Calu3 (cell line): ENCODE measurements at regions of chr1 and their contacts with region 1.

Region 1: DNA sequence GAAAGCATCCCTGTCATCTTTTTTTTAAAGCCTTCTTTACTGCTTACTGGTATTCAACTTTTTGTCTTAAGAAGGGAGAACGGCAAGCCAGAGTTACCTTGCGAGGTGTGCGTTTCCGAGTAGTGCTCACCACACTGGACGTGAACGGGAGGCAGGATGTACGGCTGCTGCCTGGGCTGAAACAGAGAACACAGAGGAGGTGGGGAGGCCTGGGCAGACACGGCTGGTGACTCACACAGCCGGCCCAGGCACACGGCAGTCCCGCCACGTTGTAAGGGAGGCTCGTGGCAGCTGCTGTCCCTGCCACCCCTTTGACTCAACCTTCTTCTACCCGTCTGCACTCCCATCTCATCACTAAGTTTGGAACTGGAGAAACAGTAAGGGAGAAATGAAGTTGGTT is 105.8 kb downstream of the SMYD2 start:
- DNase-seq: no peak
- H3K4me3 Mint-ChIP-seq: no peak overlapping the region
- H3K27ac Mint-ChIP-seq: no peak overlapping the region
- H3K4me1 Mint-ChIP-seq: no peaks in the 10 kb centered on the region
- H3K27me3 Mint-ChIP-seq: no peaks in the 10 kb centered on the region
- CTCF ChIP-seq: no peak

Region 2: GRCh38 chr1:214328770-214329469 is 57.8 kb before region 1 on chr1:
- CTCF ChIA-PET with region 1: no interaction called
- intact Hi-C with region 1: no loop called
- DNase-seq: peak; percentile 83
- H3K4me3 Mint-ChIP-seq: no peak overlapping the region
- H3K27ac Mint-ChIP-seq: no peak overlapping the region
- H3K4me1 Mint-ChIP-seq: no peaks in the 10 kb centered on the region
- H3K27me3 Mint-ChIP-seq: no peaks in the 10 kb centered on the region
- CTCF ChIP-seq: peak; percentile 88

Region 3: GRCh38 chr1:214342525-214342924 is 44.2 kb before region 1 on chr1:
- CTCF ChIA-PET with region 1: no interaction called
- intact Hi-C with region 1: no loop called
- DNase-seq: no peak
- H3K4me3 Mint-ChIP-seq: no peak overlapping the region
- H3K27ac Mint-ChIP-seq: no peak overlapping the region
- H3K4me1 Mint-ChIP-seq: no peaks in the 10 kb centered on the region
- H3K27me3 Mint-ChIP-seq: no peaks in the 10 kb centered on the region
- CTCF ChIP-seq: no peak

Region 4: GRCh38 chr1:214372092-214372491 is 14.7 kb before region 1 on chr1:
- CTCF ChIA-PET with region 1: no interaction called
- intact Hi-C with region 1: no loop called
- DNase-seq: no peak
- H3K4me3 Mint-ChIP-seq: no peak overlapping the region
- H3K27ac Mint-ChIP-seq: no peak overlapping the region
- H3K4me1 Mint-ChIP-seq: peaks cover 6% of the 10 kb centered on the region
- H3K27me3 Mint-ChIP-seq: no peaks in the 10 kb centered on the region
- CTCF ChIP-seq: no peak

Region 5: GRCh38 chr1:214593158-214593557 is 206.4 kb after region 1 on chr1:
- CTCF ChIA-PET with region 1: no interaction called
- intact Hi-C with region 1: no loop called
- DNase-seq: no peak
- H3K4me3 Mint-ChIP-seq: no peak overlapping the region
- H3K27ac Mint-ChIP-seq: no peak overlapping the region
- H3K4me1 Mint-ChIP-seq: no peaks in the 10 kb centered on the region
- H3K27me3 Mint-ChIP-seq: no peaks in the 10 kb centered on the region
- CTCF ChIP-seq: no peak

Region 6: GRCh38 chr1:214632091-214632490 is 245.3 kb after region 1 on chr1:
- CTCF ChIA-PET with region 1: interaction called, 10 read pairs
- intact Hi-C with region 1: no loop called
- DNase-seq: no peak
- H3K4me3 Mint-ChIP-seq: no peak overlapping the region
- H3K27ac Mint-ChIP-seq: no peak overlapping the region
- H3K4me1 Mint-ChIP-seq: no peaks in the 10 kb centered on the region
- H3K27me3 Mint-ChIP-seq: no peaks in the 10 kb centered on the region
- CTCF ChIP-seq: no peak